ENCODE measurements at regions of chr13 and their contacts with region 1.

Region 1: DNA sequence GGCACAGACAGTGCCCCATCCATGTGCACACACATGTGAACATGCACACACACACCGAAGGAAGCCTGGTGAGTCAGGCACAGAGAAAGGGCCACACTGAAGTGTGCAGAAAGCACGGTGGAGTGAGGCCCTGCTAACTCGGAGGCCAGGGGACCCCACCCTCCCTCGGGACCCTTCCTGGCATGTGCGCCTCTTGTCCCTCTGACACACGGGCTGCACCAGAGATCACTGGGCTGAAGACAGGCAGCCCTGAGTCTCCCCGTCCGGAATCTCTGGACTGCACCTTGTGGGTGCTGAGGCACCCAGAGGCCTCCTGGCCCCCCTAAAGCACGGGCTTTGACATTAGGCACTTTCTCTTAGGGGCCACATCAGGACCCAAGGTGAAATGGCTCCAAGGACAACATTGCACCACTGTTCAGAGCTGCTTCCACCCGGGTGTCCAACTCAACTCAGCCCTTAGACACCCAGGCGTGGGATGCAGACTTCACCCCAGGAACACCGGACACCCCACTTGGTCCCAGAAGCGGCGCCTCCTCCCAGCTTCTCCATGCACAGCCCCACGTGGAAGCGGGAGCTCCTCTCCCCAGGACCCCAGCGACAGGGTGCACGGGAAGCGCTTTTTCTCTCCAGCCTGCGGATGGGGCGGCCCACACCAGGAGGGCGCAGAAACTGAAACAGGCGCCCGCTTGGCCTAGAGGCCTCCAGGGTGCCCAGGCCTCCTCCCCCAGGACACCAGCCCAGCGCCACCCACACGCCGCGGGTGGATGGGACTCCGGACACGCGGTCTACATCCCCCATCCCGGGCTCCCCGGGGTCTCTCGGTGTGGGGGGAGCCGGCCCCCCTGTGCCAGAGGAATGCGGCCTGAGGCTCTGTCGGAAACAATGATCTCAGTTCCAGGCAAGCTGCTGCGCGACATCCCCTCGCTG is 90.2 kb downstream of the SPACA7 start:
- DNase-seq: no peak
- H3K4me3 ChIP-seq: no peak overlapping the region
- H3K27ac ChIP-seq: no peak overlapping the region
- H3K4me1 ChIP-seq: no peaks in the 10 kb centered on the region
- H3K27me3 ChIP-seq: no peaks in the 10 kb centered on the region
- CTCF ChIP-seq: no peak

Region 2: DNA sequence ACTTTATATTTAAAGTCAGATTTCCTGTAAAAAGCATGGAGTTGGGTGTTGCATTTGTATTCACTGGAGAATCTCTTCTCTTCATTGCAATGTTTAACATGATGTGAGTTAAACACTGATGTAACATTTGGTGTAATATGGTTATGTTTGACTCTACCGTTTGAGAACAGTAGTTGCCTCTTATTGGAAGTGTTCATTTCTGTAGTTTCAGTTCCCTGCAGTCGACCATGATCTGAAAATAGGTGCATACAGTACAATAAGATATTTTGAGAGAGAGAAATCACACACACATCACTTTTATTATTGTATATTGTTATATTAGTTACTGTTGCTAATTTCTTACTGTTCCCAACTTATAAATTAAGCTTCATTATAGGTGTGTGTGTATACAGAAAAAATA is 195.4 kb before region 1 on chr13:
- intact Hi-C with region 1: no loop called
- DNase-seq: no peak
- H3K4me3 ChIP-seq: no peak overlapping the region
- H3K27ac ChIP-seq: no peak overlapping the region
- H3K4me1 ChIP-seq: no peaks in the 10 kb centered on the region
- H3K27me3 ChIP-seq: no peaks in the 10 kb centered on the region
- CTCF ChIP-seq: no peak

Region 3: DNA sequence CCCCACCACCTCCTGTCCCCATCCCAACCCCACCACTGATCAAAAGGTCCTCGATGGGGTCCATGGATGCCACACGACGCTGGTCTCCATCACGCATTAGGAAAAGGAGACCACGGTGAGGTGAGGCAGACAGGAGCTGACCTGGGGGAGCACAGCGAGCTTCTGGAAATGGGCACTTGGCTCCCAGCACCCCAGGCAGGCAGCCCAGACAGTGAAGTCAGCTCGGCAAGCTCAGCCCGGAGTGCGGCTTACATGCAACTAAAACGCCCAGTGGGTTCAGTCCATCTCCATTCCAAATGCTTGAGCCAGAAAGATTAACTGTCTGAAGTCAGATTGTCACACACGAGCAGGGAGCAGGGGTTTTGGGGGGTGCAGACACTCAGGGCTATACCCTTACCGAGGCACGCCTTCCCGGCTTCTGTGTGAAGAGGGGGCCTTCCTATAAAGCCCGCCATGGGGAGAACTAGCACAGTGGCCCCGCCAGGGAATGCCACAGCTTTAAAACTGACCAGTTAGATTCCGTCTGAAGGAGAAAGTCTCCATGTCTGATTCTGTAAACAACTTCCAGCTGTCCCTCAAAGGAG is 10.8 kb before region 1 on chr13:
- intact Hi-C with region 1: loop called (anchors 1 kb)
- DNase-seq: no peak
- H3K4me3 ChIP-seq: no peak overlapping the region
- H3K27ac ChIP-seq: no peak overlapping the region
- H3K4me1 ChIP-seq: no peaks in the 10 kb centered on the region
- H3K27me3 ChIP-seq: no peaks in the 10 kb centered on the region
- CTCF ChIP-seq: no peak

Region 4: GRCh38 chr13:112638157-112638750 is 171.9 kb after region 1 on chr13:
- intact Hi-C with region 1: no loop called
- DNase-seq: no peak
- H3K4me3 ChIP-seq: no peak overlapping the region
- H3K27ac ChIP-seq: no peak overlapping the region
- H3K4me1 ChIP-seq: peaks cover 0 to 2% of the 10 kb centered on the region in 2 donors
- H3K27me3 ChIP-seq: no peaks in the 10 kb centered on the region
- CTCF ChIP-seq: no peak

Measured in ascending aorta (tissue), 2 donors.